ENCODE measurements at regions of chr1 and their contacts with region 1.

Region 1: DNA sequence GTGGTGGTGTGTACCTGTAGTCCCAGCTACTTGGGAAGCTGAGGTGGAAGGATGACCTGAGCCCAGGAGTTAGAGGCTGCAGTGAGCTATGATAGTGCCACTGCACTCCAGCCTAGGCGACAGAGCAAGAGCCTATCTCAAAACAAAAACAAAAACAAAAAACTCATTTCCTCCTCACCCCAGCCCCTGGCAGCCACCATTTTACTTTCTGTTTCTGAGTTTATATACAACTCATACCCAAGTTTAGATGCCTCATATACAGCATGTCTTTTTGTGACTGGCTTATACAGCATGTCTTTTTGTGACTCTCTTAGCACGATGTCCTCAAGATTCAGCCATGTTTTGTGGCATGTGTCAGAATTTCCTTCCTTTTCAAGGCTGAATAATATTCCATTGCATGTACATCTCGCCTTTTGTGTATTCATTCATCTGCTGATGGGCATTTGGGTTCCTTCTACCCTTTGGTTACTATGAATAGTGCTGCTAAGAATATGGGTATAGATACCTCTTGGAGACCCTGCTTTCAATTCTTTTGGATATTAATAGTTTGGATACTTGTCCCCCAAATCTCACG is 14.7 kb downstream of the COA7 start:
- DNase-seq: no peak
- ATAC-seq: no peak
- H3K4me3 ChIP-seq: no peak overlapping the region
- H3K27ac ChIP-seq: no peak overlapping the region
- H3K4me1 ChIP-seq: peaks cover 0 to 6% (median 0%) of the 10 kb centered on the region in 12 donors
- H3K27me3 ChIP-seq: no peaks in the 10 kb centered on the region
- CTCF ChIP-seq: no peak
- POLR2A ChIP-seq: no peak

Region 2: GRCh38 chr1:52127181-52128180 is 556.0 kb before region 1 on chr1:
- intact Hi-C with region 1: loop called in 4 of 10 experiments (anchors 5 to 10 kb)
- DNase-seq: peak in 3 of 5 donors; percentile 16 to 34 (median 25)
- ATAC-seq: peak in 3 of 4 donors; percentile 49 to 60 (median 59)
- H3K4me3 ChIP-seq: no peak overlapping the region
- H3K27ac ChIP-seq: no peak overlapping the region
- H3K4me1 ChIP-seq: no peaks in the 10 kb centered on the region
- H3K27me3 ChIP-seq: peaks cover 0 to 21% (median 0%) of the 10 kb centered on the region in 9 donors
- CTCF ChIP-seq: peak; percentile 56 to 77 (median 68)
- POLR2A ChIP-seq: no peak

Region 3: GRCh38 chr1:52365746-52366516 is 317.5 kb before region 1 on chr1 and contains the start of gene CC2D1B:
- intact Hi-C with region 1: loop called in 1 of 10 experiments (anchors 5 kb)
- DNase-seq: peak; percentile 98 to 100 (median 99)
- ATAC-seq: peak; percentile 95 to 97 (median 96)
- H3K4me3 ChIP-seq: peak within 1 kb of the TSS; percentile 74 to 99 (median 94)
- H3K27ac ChIP-seq: peak within 1 kb of the TSS; percentile 70 to 97 (median 93)
- H3K4me1 ChIP-seq: peaks cover 0 to 29% (median 11%) of the 10 kb centered on the region in 12 donors
- H3K27me3 ChIP-seq: no peaks in the 10 kb centered on the region
- CTCF ChIP-seq: peak in 7 of 12 donors; percentile 8 to 27 (median 23)
- POLR2A ChIP-seq: peak in 1 of 2 donors; percentile 92
- total RNA-seq, gene CC2D1B: 12.8 to 25.2 (median 16.7) TPM

Region 4: GRCh38 chr1:52413410-52413989 is 270.0 kb before region 1 on chr1:
- intact Hi-C with region 1: loop called in 2 of 10 experiments (anchors 10 kb)
- DNase-seq: no peak
- ATAC-seq: no peak
- H3K4me3 ChIP-seq: no peak overlapping the region
- H3K27ac ChIP-seq: no peak overlapping the region
- H3K4me1 ChIP-seq: peaks cover 0 to 3% (median 0%) of the 10 kb centered on the region in 12 donors
- H3K27me3 ChIP-seq: no peaks in the 10 kb centered on the region
- CTCF ChIP-seq: no peak
- POLR2A ChIP-seq: no peak

Region 5: GRCh38 chr1:52460694-52461093 is 222.8 kb before region 1 on chr1:
- intact Hi-C with region 1: loop called in 1 of 10 experiments (anchors 10 kb)
- DNase-seq: no peak
- ATAC-seq: no peak
- H3K4me3 ChIP-seq: no peak overlapping the region
- H3K27ac ChIP-seq: no peak overlapping the region
- H3K4me1 ChIP-seq: no peaks in the 10 kb centered on the region
- H3K27me3 ChIP-seq: no peaks in the 10 kb centered on the region
- CTCF ChIP-seq: no peak
- POLR2A ChIP-seq: no peak

Region 6: DNA sequence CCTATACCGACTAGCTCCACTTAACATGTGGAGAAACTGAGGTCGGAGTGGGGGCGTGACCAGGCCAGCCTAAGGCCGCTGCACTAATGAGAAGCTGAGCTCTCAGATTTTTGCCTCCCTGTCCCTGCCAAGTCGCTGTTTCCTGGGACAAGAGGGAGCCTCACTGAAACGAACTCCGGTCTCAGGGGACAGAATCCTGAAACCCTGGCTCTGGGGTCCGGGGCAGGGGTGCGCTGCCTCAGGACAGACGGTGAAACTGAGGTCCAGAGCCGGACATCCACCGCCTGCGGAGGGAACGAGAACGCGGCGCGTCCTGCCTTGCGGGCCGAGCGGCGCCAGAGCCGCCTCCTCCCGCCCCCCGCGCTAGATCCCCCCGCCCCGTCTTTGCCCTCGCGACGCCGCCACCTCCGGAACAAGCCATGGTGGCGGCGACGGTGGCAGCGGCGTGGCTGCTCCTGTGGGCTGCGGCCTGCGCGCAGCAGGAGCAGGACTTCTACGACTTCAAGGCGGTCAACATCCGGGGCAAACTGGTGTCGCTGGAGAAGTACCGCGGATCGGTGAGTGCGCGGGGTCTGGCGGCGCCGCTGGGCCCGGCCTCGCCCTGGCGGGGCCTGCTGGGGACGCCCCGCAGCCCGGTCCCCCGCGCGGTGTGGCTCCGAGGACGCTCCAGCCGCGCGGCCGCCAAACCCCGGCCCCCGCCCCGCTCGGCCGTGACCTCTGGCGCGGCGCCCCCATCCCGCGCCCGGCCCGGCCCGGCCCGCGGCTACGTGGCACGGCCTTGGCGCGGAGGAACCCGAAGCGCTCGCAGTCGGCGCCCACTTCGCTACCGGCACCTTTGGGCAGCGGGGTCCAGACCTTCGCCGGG is 81.2 kb before region 1 on chr1 and contains the start of gene GPX7:
- intact Hi-C with region 1: loop called in 1 of 10 experiments (anchors 2 kb)
- DNase-seq: peak; percentile 47 to 75 (median 59)
- ATAC-seq: peak; percentile 16 to 71 (median 64)
- H3K4me3 ChIP-seq: peak within 1 kb of the TSS; percentile 19 to 74 (median 66)
- H3K27ac ChIP-seq: peak within 1 kb of the TSS; percentile 69 to 90 (median 82)
- H3K4me1 ChIP-seq: peaks cover 0 to 37% (median 24%) of the 10 kb centered on the region in 12 donors
- H3K27me3 ChIP-seq: no peaks in the 10 kb centered on the region
- CTCF ChIP-seq: peak in 1 of 12 donors; percentile 11
- POLR2A ChIP-seq: no peak
- total RNA-seq, gene GPX7: 5.8 to 19.7 (median 8.2) TPM